Cardiac septum (tissue), 1 donor: ENCODE measurements at regions of chr3 and their contacts with region 1.

Region 1: DNA sequence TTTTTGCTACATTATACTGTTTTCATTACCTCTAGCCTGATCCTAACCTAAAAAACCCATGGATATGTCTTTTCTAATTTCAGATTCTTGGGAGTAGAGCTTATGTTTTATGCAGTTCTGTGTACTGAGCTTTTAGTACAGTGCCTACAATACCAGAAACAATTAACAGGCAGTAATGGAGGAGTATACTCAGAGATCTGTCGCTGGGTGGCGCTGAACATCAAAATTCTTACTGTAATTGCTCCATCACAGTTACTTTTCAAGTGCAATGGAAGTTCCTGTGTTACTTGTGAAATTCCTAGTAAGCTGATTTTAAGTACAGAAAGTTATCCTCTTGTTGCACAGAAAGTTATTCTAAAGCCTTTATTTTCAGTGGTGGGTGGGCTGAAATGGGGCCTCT is 66.9 kb downstream of the RNF13 start:
- DNase-seq: no peak

Region 2: DNA sequence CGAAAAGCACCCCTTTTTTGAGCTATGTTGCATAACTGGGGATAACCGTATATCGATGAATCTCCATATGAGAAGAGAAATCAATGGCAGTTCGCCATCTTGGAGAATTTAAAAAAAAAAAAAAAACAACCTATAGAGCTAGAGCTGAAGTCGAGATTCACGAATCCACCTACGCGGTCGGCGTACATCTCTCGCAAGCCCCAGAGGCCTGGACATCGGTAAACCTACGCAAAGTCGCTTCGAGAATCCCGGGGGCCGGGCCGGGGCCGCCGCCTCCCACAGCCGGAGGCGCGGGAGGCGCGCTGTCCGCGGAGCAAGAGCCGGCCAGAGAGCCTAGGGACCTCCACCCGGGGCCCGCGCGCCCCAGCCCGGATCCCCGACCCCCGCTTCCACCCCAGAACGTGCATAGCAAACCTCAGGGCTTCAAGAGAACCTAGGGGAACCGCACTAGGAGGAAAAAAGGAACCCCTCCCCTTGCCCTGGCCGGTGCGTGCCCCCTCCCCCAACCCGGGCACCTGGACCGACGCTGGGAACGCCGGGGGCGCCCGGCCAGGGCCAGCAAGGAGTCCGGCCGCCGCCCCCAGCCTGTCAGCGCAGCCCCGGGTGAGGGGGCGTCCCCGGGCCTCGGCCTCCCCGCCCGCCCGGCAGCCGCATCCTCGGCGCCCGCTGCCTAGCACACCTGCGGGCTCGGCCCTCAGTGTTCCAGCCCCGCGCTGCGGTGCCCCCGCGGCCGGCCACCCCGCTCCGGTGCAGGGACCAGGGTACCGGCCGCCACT is 90.3 kb after region 1 on chr3:
- intact Hi-C with region 1: loop called (anchors 5 kb)
- DNase-seq: peak; percentile 88